PC-3 (cell line): ENCODE measurements at regions of chr2 and their contacts with region 1.

Region 1: DNA sequence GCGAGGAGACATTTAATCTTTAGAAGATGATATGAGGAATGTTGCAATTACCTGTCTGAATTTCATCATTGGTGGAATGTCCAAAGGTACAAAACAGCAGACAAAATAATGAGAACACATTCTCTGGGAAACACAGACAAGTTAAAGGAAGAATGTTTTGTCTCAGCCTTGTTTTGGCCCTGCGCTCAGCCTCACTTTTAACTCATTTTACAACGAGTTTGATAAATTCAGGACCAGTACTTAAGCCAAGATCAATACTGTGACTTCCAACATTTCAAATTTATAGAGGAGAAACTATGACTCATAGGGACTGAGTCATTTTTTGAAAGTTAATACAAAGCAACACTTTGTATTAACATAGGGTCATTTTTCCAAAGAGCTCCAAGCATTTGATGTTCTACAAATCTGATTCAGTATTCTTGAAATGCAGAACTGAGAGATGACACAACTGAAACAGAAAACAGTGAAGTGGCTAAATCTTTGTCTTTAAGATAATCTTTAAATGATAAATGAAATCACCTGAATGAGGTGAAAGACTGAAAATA is 833.2 kb upstream of the CHAC2 start:
- DNase-seq: peak; percentile 97
- ATAC-seq: peak; percentile 71
- H3K4me3 ChIP-seq: peak overlapping the region; percentile 46; the same call in 1 of the 2 replicates
- H3K27ac ChIP-seq: peak overlapping the region; percentile 98
- H3K4me1 ChIP-seq: peaks cover 43% of the 10 kb centered on the region
- H3K27me3 ChIP-seq: no peaks in the 10 kb centered on the region
- CTCF ChIP-seq: no peak

Region 2: DNA sequence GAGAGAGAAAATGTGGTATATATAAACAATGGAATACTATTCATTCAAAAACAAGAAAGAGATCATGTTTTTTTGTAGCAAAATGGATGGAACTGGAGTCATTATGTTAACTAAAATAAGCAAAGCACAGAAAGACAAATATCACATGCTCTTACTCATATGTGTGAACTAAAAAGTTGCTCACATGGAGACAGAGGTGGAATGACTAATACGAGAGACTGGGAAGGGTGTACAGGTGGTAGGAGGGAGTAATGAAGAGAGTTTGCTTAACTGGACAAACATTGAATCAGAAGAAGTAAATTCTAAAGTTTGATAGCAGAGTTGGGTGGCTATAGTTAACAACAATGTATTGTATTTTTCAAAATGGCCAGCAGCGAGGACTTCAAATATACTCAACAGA is 247.5 kb before region 1 on chr2:
- CTCF ChIA-PET with region 1: no interaction called
- POLR2A ChIA-PET with region 1: no interaction called
- intact Hi-C with region 1: loop called (anchors 5 kb)
- DNase-seq: peak; percentile 85
- ATAC-seq: peak; percentile 100
- H3K4me3 ChIP-seq: no peak overlapping the region
- H3K27ac ChIP-seq: peak overlapping the region; percentile 77
- H3K4me1 ChIP-seq: peaks cover 12% of the 10 kb centered on the region
- H3K27me3 ChIP-seq: no peaks in the 10 kb centered on the region
- CTCF ChIP-seq: no peak

Region 3: GRCh38 chr2:52857722-52858121 is 76.7 kb before region 1 on chr2:
- CTCF ChIA-PET with region 1: no interaction called
- POLR2A ChIA-PET with region 1: no interaction called
- intact Hi-C with region 1: loop called (anchors 1 kb)
- DNase-seq: peak; percentile 73
- ATAC-seq: peak; percentile 95
- H3K4me3 ChIP-seq: no peak overlapping the region
- H3K27ac ChIP-seq: no peak overlapping the region
- H3K4me1 ChIP-seq: peaks cover 13% of the 10 kb centered on the region
- H3K27me3 ChIP-seq: no peaks in the 10 kb centered on the region
- CTCF ChIP-seq: no peak

Region 4: GRCh38 chr2:52881606-52882005 is 52.8 kb before region 1 on chr2:
- CTCF ChIA-PET with region 1: no interaction called
- POLR2A ChIA-PET with region 1: no interaction called
- intact Hi-C with region 1: loop called (anchors 1 kb)
- DNase-seq: peak; percentile 93
- ATAC-seq: peak; percentile 96
- H3K4me3 ChIP-seq: 0 out of 2 replicates have a peak overlapping the region, but pooled peaks have one; percentile 7
- H3K27ac ChIP-seq: peak overlapping the region; percentile 72
- H3K4me1 ChIP-seq: peaks cover 38% of the 10 kb centered on the region
- H3K27me3 ChIP-seq: no peaks in the 10 kb centered on the region
- CTCF ChIP-seq: no peak

Region 5: DNA sequence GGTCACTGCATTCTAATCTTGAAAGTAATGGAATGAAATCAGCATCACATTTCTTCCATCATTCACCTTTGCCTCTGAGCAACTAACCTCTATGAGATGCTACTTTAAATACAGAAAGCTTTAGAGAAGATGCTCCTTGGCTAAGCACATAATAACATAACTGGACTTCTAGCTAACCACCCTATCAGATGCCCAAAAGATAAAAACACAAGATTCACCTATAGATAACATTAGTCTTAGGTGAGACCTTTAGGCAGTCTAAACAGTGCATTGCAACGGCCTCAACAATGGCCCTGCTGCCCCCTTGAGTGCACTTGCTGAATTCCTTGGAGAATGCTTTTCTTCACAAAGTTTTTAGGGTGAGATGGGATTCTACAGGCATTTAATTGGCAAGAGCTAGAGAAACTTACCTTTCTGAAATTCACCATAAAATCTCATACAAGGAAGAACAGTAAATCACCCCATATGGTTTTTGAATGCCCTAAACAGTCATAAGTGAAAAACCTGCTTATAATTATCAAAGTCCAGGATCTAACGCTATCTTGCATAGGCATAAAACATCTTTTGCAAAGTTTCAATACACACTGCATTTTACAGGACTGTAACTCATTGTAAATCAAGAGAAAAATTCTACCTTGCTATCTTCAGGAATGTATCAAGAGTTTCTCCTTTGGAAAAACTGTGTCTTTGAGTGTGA is 42.0 kb after region 1 on chr2:
- CTCF ChIA-PET with region 1: interaction called, 3 read pairs
- POLR2A ChIA-PET with region 1: no interaction called
- intact Hi-C with region 1: loop called (anchors 2 kb)
- DNase-seq: peak; percentile 72
- ATAC-seq: peak; percentile 88
- H3K4me3 ChIP-seq: no peak overlapping the region
- H3K27ac ChIP-seq: no peak overlapping the region
- H3K4me1 ChIP-seq: no peaks in the 10 kb centered on the region
- H3K27me3 ChIP-seq: no peaks in the 10 kb centered on the region
- CTCF ChIP-seq: peak; percentile 93